Naive thymus-derived CD4-positive, alpha-beta T cell (primary cell): ENCODE measurements at regions of chr19 and their contacts with region 1.

Region 1: DNA sequence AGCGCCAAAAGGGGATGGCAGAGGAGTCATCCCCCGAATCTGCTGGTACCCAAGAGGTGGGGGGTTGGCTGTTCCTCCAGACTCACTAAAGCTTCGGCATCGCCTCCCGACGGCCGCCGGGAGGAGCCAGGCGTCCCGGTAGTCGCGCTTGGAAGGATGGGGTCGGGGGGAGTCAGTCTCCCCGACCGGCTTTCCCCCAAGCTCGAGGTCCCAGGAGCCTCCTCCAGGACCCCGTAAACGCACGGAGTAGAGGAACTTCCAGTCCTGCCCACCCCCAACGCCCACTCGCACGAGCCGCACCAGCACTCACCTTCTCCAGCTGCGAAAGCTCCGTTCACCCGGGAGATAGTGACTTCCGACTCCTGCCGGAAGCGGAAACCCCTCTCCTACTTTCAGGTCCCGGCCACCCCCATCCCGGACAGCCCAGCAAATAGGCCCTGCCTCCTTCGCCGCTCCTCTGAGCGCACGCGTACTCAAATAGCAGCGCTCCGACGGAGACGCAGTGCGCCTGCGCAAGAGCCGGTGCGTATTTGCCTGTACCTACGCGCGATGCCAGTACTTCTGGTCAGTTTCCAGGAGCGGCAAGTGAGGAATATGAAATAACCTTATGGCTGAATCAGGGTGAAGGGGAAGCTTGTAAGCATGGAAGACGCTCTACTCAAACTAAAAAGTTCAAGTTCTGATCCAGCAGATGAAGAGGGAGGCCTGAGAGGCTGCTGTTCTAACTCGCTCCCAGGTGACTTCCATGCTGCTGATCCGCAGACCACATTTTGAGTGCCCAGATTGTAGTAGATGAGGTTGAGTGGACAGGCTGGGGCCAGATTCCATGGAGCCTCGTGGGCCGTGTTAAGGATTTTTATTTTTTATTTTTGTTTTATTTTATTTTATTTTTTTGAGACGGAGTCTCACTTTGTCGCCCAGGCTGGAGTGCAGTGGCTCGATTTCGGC is at the start of gene ELOF1:
- DNase-seq: peak; percentile 90 to 97 (median 94)
- ATAC-seq: peak; percentile 97
- H3K4me3 ChIP-seq: peak within 1 kb of the TSS; percentile 94
- H3K4me3 Mint-ChIP-seq: peak within 1 kb of the TSS; percentile 89 to 99 (median 96)
- H3K27ac ChIP-seq: peak within 1 kb of the TSS; percentile 82
- H3K27ac Mint-ChIP-seq: peak within 1 kb of the TSS; percentile 84 to 98 (median 95)
- H3K4me1 ChIP-seq: peaks cover 16 to 19% of the 10 kb centered on the region in 2 donors
- H3K4me1 Mint-ChIP-seq: peaks cover 34 to 58% (median 45%) of the 10 kb centered on the region in 7 donors
- H3K27me3 ChIP-seq: no peaks in the 10 kb centered on the region
- H3K27me3 Mint-ChIP-seq: no peaks in the 10 kb centered on the region
- total RNA-seq, gene ELOF1: 34.0 to 59.8 (median 41.9) TPM

Region 2: DNA sequence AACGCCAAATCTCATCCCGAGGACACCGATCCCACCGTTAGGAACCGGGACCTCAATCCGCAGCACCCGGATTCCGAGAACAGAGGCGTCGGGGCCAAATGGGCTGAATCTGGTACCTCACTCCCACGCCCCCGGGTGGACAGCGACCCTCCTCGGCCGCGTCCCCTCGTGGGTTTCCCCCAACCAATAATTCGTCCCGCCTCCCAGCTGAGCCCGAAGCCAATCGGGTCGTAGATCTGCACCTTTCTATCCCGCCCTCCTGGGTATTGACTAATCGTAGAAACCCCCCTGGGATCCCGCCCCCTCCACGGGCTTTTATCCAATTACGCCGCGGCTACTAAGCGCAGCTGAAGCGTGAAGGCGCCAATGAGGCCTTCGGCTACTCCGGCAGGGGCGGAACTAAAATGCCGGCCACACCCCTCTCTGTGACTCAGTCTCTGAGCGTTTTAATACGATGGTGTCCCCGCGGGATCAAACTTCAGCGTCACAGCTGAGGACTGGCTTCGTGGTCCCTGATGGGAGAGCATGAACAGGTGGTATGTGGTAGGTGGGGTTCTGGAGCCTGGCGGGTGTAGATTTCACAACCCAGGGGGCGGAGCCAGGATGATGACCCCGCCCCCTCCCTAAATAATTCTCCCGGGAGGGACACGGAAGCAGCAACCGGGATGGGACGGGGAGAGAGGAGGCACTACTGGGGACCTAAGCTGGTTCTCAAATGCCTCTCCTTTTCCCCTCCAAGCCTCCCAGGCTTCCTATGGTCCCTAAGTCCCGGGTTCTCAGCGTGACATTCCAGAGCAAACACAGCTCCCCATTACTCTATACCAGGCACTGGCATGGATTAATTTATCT is 212.8 kb before region 1 on chr19 and contains the starts of genes CCDC159 and TMEM205:
- CTCF ChIA-PET with region 1: no interaction called
- POLR2A ChIA-PET with region 1: no interaction called
- intact Hi-C with region 1: loop called in 1 of 2 experiments (anchors 1 kb)
- DNase-seq: peak; percentile 82 to 99 (median 98)
- ATAC-seq: peak; percentile 98
- H3K4me3 ChIP-seq: peak within 1 kb of the TSS; percentile 75
- H3K4me3 Mint-ChIP-seq: peak within 1 kb of the TSS; percentile 92 to 100 (median 98)
- H3K27ac ChIP-seq: peak within 1 kb of the TSS; percentile 83
- H3K27ac Mint-ChIP-seq: peak within 1 kb of the TSS; percentile 89 to 98 (median 96)
- H3K4me1 ChIP-seq: peaks cover 13 to 14% of the 10 kb centered on the region in 2 donors
- H3K4me1 Mint-ChIP-seq: peaks cover 22 to 39% (median 29%) of the 10 kb centered on the region in 7 donors
- H3K27me3 ChIP-seq: no peaks in the 10 kb centered on the region
- H3K27me3 Mint-ChIP-seq: no peaks in the 10 kb centered on the region
- total RNA-seq, gene CCDC159: 17.6 to 87.4 (median 84.3) TPM
- total RNA-seq, gene TMEM205: 19.5 to 36.7 (median 29.5) TPM

Region 3: DNA sequence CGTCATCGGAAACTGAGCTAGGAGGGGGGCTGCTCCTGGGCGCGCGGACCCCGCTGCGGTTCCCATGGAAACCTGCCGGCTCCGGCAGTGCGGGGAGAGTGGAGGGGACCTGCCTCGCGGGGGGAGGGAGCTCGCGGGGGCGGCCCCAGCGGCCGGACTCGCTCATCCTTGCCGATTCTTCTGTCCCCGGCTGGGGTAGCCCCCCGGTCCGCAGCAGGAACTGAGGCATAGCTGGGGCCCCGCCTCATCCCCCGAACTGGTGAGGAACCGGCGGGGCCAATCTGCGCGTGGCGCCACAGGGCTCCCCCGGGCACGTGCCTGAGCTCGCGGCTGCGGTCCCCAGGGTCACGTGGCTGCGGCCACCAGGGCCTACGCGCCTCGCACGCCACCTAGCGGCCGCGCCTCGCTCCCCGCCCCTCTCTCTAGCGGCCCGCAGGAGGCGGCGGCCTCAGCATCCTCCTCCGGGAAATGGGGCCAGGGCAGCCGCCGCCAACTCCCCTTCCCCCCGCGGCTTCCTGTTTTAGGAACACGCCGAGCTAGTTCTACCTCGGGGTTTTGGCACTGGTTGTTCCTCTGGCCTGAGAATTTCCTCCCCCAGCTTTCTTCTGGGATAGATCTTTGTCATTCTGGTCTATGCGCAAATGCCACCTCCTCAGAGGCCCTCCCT is 76.6 kb before region 1 on chr19:
- CTCF ChIA-PET with region 1: no interaction called
- POLR2A ChIA-PET with region 1: no interaction called
- intact Hi-C with region 1: no loop called
- DNase-seq: peak; percentile 63 to 92 (median 76)
- ATAC-seq: peak; percentile 92
- H3K4me3 ChIP-seq: peak overlapping the region; percentile 19
- H3K4me3 Mint-ChIP-seq: peak overlapping the region in 9 of 10 donors; percentile 52 to 83 (median 71)
- H3K27ac ChIP-seq: no peak overlapping the region
- H3K27ac Mint-ChIP-seq: peak overlapping the region in 2 of 9 donors; percentile 21 to 85
- H3K4me1 ChIP-seq: peaks cover 15 to 20% of the 10 kb centered on the region in 2 donors
- H3K4me1 Mint-ChIP-seq: peaks cover 12 to 24% (median 21%) of the 10 kb centered on the region in 7 donors
- H3K27me3 ChIP-seq: peaks cover 8 to 17% of the 10 kb centered on the region in 2 donors
- H3K27me3 Mint-ChIP-seq: peaks cover 25 to 37% (median 33%) of the 10 kb centered on the region in 5 donors

Region 4: DNA sequence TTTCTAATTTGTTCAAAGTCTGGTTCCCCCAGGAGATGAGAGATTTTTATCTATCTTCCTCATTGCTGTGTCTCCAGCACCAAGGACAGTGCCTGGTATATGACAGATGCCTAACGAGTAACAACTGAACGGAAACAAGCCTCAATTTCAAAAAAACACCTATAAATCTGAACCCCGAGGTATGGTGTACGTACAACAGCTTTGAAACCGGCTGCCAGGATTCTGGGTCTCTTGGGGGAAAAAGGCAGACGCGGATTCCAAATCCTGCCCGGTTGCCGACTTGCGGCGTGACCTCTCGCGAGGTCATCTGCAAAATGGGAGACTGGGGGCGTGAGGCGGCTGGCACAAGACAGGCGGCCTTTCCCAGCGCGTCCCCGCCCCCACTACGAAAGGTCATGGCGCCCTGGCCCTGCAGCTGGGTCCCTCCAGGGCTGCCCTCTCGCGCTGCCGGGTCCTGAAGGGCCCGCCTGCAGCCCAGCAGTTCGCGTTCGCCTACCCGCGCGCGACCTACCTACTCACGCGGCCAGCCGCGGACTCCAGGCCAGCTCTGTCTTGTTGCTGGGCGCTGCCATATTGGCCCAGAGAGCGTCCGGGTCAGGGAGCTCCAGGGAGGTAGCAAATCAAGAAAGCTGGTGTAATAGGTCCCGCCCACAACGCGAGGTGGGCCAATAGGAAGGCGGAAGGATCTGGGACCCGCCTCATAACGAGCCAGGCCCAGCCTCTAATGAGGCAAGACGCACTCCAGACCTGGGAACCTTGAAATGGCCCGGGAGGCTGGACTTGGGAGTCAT is 30.4 kb before region 1 on chr19 and contains the start of gene ECSIT:
- CTCF ChIA-PET with region 1: no interaction called
- POLR2A ChIA-PET with region 1: interaction called, 17 read pairs
- intact Hi-C with region 1: loop called (anchors 1 kb)
- DNase-seq: peak; percentile 78 to 93 (median 89)
- ATAC-seq: peak; percentile 99
- H3K4me3 ChIP-seq: peak within 1 kb of the TSS; percentile 90
- H3K4me3 Mint-ChIP-seq: peak within 1 kb of the TSS; percentile 89 to 99 (median 96)
- H3K27ac ChIP-seq: peak within 1 kb of the TSS; percentile 77
- H3K27ac Mint-ChIP-seq: peak within 1 kb of the TSS; percentile 85 to 96 (median 94)
- H3K4me1 ChIP-seq: peaks cover 8 to 10% of the 10 kb centered on the region in 2 donors
- H3K4me1 Mint-ChIP-seq: peaks cover 12 to 27% (median 21%) of the 10 kb centered on the region in 7 donors
- H3K27me3 ChIP-seq: no peaks in the 10 kb centered on the region
- H3K27me3 Mint-ChIP-seq: no peaks in the 10 kb centered on the region
- total RNA-seq, gene ECSIT: 25.8 to 50.3 (median 32.5) TPM

Region 5: DNA sequence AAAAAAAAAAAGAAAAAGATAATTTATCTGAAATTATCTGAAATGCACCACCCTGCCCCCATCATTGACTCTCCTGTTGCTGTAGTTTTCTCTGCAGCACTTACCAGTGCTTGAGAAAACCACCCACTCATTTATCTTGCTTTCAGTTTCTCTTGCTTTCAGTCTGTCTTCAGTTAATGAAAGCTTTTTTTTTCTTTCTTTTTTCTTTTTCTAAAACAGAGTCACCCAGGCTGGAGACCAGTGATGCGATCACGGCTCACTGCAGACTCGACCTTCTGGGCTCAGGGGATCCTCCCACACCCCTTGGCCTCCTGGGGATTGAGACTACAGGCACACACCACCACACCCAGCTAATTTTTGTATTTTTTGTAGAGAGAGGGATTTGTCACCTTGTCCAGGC is 22.6 kb after region 1 on chr19:
- CTCF ChIA-PET with region 1: interaction called, 9 read pairs
- POLR2A ChIA-PET with region 1: interaction called, 33 read pairs
- intact Hi-C with region 1: loop called (anchors 1 to 2 kb)
- DNase-seq: peak in 8 of 9 donors; percentile 37 to 64 (median 54)
- ATAC-seq: peak; percentile 69
- H3K4me3 ChIP-seq: peak overlapping the region; percentile 20
- H3K4me3 Mint-ChIP-seq: peak overlapping the region; percentile 69 to 92 (median 80)
- H3K27ac ChIP-seq: peak overlapping the region; percentile 64
- H3K27ac Mint-ChIP-seq: peak overlapping the region; percentile 80 to 97 (median 93)
- H3K4me1 ChIP-seq: peaks cover 9 to 36% of the 10 kb centered on the region in 2 donors
- H3K4me1 Mint-ChIP-seq: peaks cover 16 to 43% (median 35%) of the 10 kb centered on the region in 7 donors
- H3K27me3 ChIP-seq: no peaks in the 10 kb centered on the region
- H3K27me3 Mint-ChIP-seq: no peaks in the 10 kb centered on the region

Region 6: DNA sequence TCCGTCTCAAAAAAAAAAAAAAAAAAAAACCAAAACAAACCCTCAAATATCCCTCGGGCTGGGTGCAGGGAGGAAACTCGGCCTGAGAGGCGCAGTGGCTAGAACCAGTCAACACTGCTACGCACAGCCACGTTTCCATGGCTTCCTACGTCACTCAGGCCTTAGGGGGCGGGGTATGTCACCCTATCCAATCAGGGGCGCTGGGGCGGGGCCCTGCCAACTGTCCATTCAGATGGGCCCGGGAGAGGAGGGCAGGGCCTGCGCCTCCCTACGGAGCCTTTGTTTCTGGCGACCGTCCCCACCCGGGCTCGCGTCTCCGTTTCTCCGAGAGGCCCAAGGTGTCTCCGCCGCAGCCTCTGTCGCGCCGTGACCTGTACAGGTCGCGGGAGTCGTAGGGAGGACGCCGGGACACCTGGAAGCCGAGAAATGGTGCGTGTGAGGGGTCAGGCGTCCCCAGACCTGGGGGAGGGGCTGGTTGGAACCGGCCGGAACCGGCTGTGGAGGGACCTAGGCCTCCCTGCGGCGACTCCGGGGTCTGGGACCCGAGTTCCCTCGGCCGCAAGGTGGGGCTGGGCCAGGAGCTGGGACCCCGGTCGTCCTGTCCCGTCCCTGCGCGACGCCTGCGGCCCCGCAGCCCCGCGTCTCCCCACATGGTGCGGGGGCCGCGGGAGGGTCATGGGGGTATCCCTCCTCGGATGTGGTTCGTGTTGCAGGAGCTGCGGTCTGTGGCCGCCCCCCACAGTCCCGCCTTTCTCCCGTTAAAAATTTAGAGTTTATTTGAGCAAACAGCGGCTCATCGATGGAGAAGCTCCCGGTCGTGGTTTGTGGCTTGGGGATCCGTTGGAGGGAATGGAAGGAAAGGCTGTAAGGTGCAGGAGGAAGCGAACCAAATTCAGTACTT is 38.3 kb after region 1 on chr19 and contains the start of gene ZNF627:
- CTCF ChIA-PET with region 1: no interaction called
- POLR2A ChIA-PET with region 1: interaction called, 3 read pairs
- intact Hi-C with region 1: loop called in 1 of 2 experiments (anchors 2 kb)
- DNase-seq: peak; percentile 87 to 98 (median 96)
- ATAC-seq: peak; percentile 100
- H3K4me3 ChIP-seq: peak within 1 kb of the TSS; percentile 85
- H3K4me3 Mint-ChIP-seq: peak within 1 kb of the TSS; percentile 87 to 96 (median 92)
- H3K27ac ChIP-seq: peak within 1 kb of the TSS; percentile 88
- H3K27ac Mint-ChIP-seq: peak within 1 kb of the TSS; percentile 68 to 95 (median 91)
- H3K4me1 ChIP-seq: peaks cover 3 to 14% of the 10 kb centered on the region in 2 donors
- H3K4me1 Mint-ChIP-seq: peaks cover 18 to 43% (median 27%) of the 10 kb centered on the region in 7 donors
- H3K27me3 ChIP-seq: no peaks in the 10 kb centered on the region
- H3K27me3 Mint-ChIP-seq: no peaks in the 10 kb centered on the region
- total RNA-seq, gene ZNF627: 5.2 to 15.4 (median 12.3) TPM

Region 7: DNA sequence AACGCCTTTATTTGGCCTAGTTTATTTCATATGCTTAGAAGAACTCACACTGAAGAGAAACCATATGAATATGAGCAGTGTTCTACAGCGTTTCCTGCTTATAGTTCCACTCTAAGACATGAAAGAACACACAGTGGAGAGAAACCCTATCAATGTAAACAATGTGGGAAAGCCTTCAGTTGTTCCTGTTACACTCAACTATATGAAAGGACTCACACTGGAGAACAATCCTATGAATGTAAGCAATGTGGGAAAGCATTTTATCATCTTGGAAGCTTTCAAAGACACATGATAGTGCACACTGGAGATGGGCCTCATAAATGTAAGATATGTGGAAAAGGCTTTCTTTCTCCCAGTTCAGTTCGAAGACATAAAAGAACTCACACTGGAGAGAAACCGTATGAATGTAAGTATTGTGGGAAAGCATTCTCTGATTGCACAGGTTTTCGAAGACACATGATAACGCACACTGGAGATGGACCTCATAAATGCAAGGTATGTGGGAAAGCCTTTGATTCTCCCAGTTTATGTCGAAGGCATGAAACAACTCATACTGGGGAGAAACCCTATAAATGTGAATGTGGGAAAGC is 221.4 kb after region 1 on chr19:
- CTCF ChIA-PET with region 1: no interaction called
- POLR2A ChIA-PET with region 1: no interaction called
- intact Hi-C with region 1: no loop called
- DNase-seq: peak in 1 of 9 donors; percentile 9
- ATAC-seq: no peak
- H3K4me3 ChIP-seq: no peak overlapping the region
- H3K4me3 Mint-ChIP-seq: no peak overlapping the region
- H3K27ac ChIP-seq: no peak overlapping the region
- H3K27ac Mint-ChIP-seq: no peak overlapping the region
- H3K4me1 ChIP-seq: no peaks in the 10 kb centered on the region
- H3K4me1 Mint-ChIP-seq: no peaks in the 10 kb centered on the region
- H3K27me3 ChIP-seq: no peaks in the 10 kb centered on the region
- H3K27me3 Mint-ChIP-seq: no peaks in the 10 kb centered on the region

Region 8: GRCh38 chr19:11814029-11814699 is 255.0 kb after region 1 on chr19 and contains the start of gene ZNF440:
- CTCF ChIA-PET with region 1: no interaction called
- POLR2A ChIA-PET with region 1: no interaction called
- intact Hi-C with region 1: loop called in 1 of 2 experiments (anchors 5 kb)
- DNase-seq: peak; percentile 65 to 88 (median 73)
- ATAC-seq: peak; percentile 99
- H3K4me3 ChIP-seq: peak within 1 kb of the TSS; percentile 94
- H3K4me3 Mint-ChIP-seq: peak within 1 kb of the TSS; percentile 85 to 96 (median 92)
- H3K27ac ChIP-seq: peak within 1 kb of the TSS; percentile 66
- H3K27ac Mint-ChIP-seq: peak within 1 kb of the TSS; percentile 72 to 90 (median 81)
- H3K4me1 ChIP-seq: peaks cover 0 to 4% of the 10 kb centered on the region in 2 donors
- H3K4me1 Mint-ChIP-seq: peaks cover 10 to 39% (median 19%) of the 10 kb centered on the region in 7 donors
- H3K27me3 ChIP-seq: no peaks in the 10 kb centered on the region
- H3K27me3 Mint-ChIP-seq: no peaks in the 10 kb centered on the region
- total RNA-seq, gene ZNF440: 10.4 to 19.5 (median 16.0) TPM

Region 9: GRCh38 chr19:11832253-11832912 is 273.2 kb after region 1 on chr19:
- CTCF ChIA-PET with region 1: no interaction called
- POLR2A ChIA-PET with region 1: no interaction called
- intact Hi-C with region 1: no loop called
- DNase-seq: no peak
- ATAC-seq: no peak
- H3K4me3 ChIP-seq: peak overlapping the region; percentile 16
- H3K4me3 Mint-ChIP-seq: no peak overlapping the region
- H3K27ac ChIP-seq: no peak overlapping the region
- H3K27ac Mint-ChIP-seq: no peak overlapping the region
- H3K4me1 ChIP-seq: no peaks in the 10 kb centered on the region
- H3K4me1 Mint-ChIP-seq: peaks cover 0 to under 1% (median 0%) of the 10 kb centered on the region in 7 donors
- H3K27me3 ChIP-seq: no peaks in the 10 kb centered on the region
- H3K27me3 Mint-ChIP-seq: no peaks in the 10 kb centered on the region